Activated CD4-positive, alpha-beta T cell treated with anti-CD3 and anti-CD28 coated beads for 36 hours (primary cell): ENCODE measurements at regions of chr18 and their contacts with region 1.

Region 1: DNA sequence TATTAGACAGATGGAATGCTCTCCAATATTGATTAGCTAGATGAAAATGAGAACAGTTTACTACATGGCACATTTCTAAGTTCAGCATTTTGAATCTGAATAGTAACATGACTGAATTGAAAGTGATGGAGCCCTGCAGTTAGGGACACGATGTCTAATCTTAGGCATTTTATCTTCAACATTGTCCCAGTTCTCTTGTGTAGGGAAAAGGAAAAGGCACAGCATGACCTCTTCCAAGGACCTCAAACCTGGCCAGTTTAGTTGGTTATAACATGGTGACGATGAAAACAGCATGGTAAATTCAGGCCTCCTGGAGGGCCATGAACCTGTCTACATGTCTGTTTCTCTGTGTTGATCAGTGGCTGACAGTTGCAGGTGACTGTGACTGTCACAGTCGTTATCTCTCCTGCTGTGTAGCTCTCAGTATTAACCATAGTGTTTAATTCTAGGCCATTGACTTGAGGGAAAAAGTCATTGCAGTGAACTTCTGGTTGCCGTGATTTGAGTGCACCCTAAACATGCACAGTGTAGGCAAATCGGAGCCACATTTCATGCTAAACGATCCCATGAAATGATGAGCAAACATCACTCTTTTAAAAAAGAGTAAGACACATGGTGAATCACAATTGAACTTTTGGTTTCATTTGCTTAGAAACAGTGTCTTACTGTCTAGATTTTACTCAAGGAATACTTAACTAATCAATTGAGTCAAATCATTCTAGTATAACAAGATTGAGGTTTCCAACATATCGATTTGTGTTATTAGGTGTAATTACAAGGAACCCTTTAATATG is 129.7 kb downstream of the PHLPP1 start:
- DNase-seq: peak; percentile 63
- ATAC-seq: peak; percentile 90
- H3K4me3 Mint-ChIP-seq: peak overlapping the region; percentile 15
- H3K27ac Mint-ChIP-seq: peak overlapping the region; percentile 91
- H3K4me1 Mint-ChIP-seq: peaks cover 40% of the 10 kb centered on the region
- H3K27me3 Mint-ChIP-seq: no peaks in the 10 kb centered on the region

Region 2: DNA sequence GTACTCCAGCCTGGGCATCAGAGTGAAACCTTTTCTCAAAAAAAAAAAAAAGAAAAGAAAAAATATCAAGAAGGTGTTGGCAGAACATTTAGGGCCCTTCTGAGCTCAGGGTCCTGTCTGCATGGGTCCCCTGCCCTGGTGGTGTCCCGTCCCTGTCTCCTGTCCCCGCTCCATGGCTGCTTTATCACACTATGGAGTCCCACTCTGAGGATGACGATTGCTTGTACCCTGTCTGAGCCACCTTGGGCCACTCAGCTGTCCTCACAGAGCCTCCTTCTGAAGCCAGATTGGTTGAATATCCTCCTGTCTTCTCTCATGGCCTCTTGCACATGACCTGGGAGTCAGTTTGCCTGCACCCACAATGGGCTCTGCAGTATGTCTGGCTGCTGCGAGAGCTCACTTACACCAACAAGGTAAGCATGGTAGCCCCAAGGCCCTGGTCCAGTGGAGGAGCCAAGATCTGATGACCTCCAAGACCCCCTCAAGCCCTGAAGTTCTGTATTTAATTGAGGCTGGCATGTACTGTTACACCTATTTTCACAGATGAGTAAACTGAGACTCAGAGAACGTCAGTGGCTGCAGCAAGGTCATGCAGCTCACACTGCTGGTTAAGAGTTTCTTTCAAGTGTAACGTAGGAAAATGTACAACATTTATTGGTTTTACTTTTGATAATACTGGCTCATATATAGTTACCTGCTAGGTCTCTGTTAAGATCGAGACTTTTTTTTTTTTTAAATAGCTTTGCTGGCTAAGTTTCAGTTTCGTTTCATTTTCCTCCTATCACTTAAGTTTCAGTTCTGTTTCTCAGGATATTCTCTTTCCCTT is 339.2 kb before region 1 on chr18:
- CTCF ChIA-PET with region 1: no interaction called
- POLR2A ChIA-PET with region 1: interaction called, 3 read pairs
- intact Hi-C with region 1: loop called in 1 of 2 experiments (anchors 2 kb)
- DNase-seq: peak; percentile 66
- ATAC-seq: peak; percentile 99
- H3K4me3 Mint-ChIP-seq: peak overlapping the region; percentile 60
- H3K27ac Mint-ChIP-seq: peak overlapping the region; percentile 98
- H3K4me1 Mint-ChIP-seq: peaks cover 26% of the 10 kb centered on the region
- H3K27me3 Mint-ChIP-seq: no peaks in the 10 kb centered on the region

Region 3: GRCh38 chr18:62741118-62741566 is 103.9 kb before region 1 on chr18:
- CTCF ChIA-PET with region 1: no interaction called
- POLR2A ChIA-PET with region 1: no interaction called
- intact Hi-C with region 1: loop called in 1 of 2 experiments (anchors 1 kb)
- DNase-seq: peak; percentile 57
- ATAC-seq: peak; percentile 85
- H3K4me3 Mint-ChIP-seq: no peak overlapping the region
- H3K27ac Mint-ChIP-seq: no peak overlapping the region
- H3K4me1 Mint-ChIP-seq: peaks cover 14% of the 10 kb centered on the region
- H3K27me3 Mint-ChIP-seq: no peaks in the 10 kb centered on the region

Region 4: DNA sequence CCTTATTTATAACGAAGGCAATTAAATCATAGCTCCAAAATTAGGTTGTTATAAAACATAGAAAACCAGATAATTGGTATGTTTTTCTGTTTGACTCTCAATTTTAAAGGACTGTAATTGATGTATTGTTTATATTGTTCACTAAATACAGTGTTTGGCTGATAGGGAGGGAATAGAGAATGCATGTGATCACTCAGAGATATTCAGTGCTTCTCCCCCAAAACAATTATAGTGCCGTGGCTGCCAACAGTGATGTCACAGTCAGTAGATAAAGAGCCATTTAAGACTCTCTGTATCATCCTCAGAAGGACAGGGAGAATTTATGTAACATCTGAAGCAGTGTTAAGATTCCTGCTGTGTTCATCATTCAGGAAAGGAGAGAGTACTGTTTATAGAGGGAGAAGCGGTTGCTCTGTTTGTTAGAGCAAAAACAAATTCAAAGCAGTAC is 60.1 kb before region 1 on chr18:
- CTCF ChIA-PET with region 1: interaction called, 4 read pairs
- POLR2A ChIA-PET with region 1: no interaction called
- intact Hi-C with region 1: loop called (anchors 1 kb)
- DNase-seq: no peak
- ATAC-seq: peak; percentile 42
- H3K4me3 Mint-ChIP-seq: no peak overlapping the region
- H3K27ac Mint-ChIP-seq: no peak overlapping the region
- H3K4me1 Mint-ChIP-seq: peaks cover 55% of the 10 kb centered on the region
- H3K27me3 Mint-ChIP-seq: peaks cover 3% of the 10 kb centered on the region

Region 5: DNA sequence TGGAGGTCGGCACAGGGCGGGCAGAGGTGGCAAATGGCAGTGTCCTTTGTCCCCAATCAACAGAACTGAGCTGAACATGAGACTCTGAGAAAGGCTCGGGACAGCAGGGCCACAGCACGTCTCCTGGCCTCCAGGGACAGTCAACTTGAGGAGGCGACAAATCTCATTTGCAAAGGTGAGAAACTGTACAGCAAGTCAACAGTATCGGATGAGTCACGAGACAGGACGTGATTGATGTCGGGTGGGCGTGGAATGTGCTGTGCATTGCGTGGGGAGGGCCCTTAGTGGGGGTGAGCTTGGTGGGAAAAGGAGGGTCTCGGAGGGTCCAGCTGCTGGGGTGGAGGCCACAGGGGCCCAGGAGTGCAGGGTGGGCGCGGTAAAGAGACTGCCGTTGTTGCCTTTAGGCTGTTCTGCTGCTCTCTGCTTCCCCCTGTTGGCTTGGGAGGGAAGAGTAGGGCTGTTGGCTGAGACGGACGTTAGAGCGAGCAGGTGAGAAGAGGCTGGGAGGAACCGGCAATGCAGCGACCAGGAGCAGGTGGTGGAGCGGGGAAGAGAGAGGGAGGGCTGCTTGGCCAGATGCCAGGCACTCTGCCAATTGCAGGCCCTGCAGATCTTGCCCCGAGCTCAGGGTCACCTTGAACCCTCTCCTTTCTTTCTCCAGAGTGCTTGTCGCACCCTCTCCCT is 310.3 kb after region 1 on chr18:
- CTCF ChIA-PET with region 1: no interaction called
- POLR2A ChIA-PET with region 1: no interaction called
- intact Hi-C with region 1: loop called in 1 of 2 experiments (anchors 10 kb)
- DNase-seq: peak; percentile 89
- ATAC-seq: peak; percentile 66
- H3K4me3 Mint-ChIP-seq: peak overlapping the region; percentile 73
- H3K27ac Mint-ChIP-seq: peak overlapping the region; percentile 95
- H3K4me1 Mint-ChIP-seq: peaks cover 99% of the 10 kb centered on the region
- H3K27me3 Mint-ChIP-seq: no peaks in the 10 kb centered on the region

Region 6: GRCh38 chr18:63422087-63422809 is 577.2 kb after region 1 on chr18 and contains the start of gene VPS4B:
- CTCF ChIA-PET with region 1: no interaction called
- POLR2A ChIA-PET with region 1: no interaction called
- intact Hi-C with region 1: loop called in 1 of 2 experiments (anchors 10 kb)
- DNase-seq: peak; percentile 100
- ATAC-seq: peak; percentile 95
- H3K4me3 Mint-ChIP-seq: peak within 1 kb of the TSS; percentile 99
- H3K27ac Mint-ChIP-seq: peak within 1 kb of the TSS; percentile 95
- H3K4me1 Mint-ChIP-seq: peaks cover 30% of the 10 kb centered on the region
- H3K27me3 Mint-ChIP-seq: no peaks in the 10 kb centered on the region
- total RNA-seq, gene VPS4B: 40.7 to 48.4 TPM